MCF 10A (cell line): ENCODE measurements at regions of chr10 and their contacts with region 1.

Region 1: DNA sequence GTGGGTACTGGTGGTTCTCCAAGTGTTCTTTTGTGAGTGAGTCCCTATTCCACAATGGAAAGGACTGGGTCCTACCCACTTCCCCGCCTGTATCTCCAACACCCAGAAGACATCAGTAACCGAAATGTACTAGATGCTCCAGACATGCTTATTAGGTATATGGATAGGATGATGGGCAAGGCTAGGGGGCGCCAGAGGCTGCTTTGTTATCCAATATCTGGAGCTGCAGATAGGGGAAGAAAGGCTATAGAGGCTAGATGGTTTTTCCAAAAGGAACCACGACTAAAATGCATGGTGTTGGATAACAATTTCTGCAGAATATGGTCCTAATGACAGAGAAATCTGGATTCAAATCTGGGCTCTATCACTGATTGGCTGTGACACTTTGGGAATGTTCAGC is 56.2 kb upstream of the TM9SF3 start:
- DNase-seq: peak; percentile 59
- H3K4me3 Mint-ChIP-seq: no peak overlapping the region
- H3K27ac Mint-ChIP-seq: no peak overlapping the region
- H3K4me1 Mint-ChIP-seq: peaks cover 6% of the 10 kb centered on the region
- H3K27me3 Mint-ChIP-seq: no peaks in the 10 kb centered on the region
- CTCF ChIP-seq: no peak

Region 2: DNA sequence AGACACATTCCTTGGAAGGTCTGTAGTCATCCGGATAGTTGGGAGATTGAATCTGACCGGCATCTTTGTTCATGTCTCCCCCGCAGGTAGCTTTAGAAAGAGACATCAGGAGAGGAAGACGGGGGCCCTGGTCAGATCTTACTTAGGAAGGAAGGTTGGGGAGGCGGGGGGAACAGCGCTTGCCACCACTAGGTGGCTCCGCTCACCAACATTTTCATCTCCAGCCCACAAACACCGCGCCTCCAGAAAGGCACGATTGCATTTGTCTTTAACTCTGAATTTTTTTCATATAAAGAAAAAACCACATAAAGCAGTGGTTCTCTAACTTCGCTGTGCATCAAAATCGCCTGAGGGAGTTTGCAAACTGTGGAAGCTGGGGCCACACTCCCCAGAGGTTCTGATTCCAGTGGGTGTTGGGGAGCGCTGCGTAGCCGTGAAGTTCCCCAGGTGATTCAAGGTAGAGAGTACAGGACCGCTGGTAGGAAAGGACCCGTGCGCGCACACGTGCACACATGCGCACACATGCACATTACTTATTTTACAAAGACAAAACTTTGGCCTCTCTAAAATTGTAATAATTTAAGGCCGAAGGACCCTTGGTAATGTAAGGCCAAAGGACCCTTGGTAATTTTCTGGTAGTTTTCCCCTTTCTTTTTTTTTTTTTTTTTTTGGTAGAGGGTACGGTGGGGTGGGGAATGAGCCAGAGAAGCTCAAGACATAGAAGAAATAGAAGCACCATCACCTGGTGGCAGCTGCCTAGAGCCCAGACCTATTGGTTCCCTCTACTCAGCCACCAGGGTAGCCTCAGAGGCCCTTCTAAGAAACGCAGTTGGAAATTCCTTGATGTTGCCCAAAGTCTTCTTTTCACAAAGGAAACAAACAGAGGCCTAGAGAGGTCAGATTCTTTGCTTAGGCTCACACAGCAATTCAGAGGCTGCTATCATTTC is 246.8 kb before region 1 on chr10:
- CTCF ChIA-PET with region 1: interaction called, 3 read pairs
- POLR2A ChIA-PET with region 1: no interaction called
- intact Hi-C with region 1: loop called (anchors 5 kb)
- DNase-seq: peak; percentile 65
- H3K4me3 Mint-ChIP-seq: no peak overlapping the region
- H3K27ac Mint-ChIP-seq: no peak overlapping the region
- H3K4me1 Mint-ChIP-seq: no peaks in the 10 kb centered on the region
- H3K27me3 Mint-ChIP-seq: peaks cover 71% of the 10 kb centered on the region
- CTCF ChIP-seq: peak; percentile 76

Region 3: GRCh38 chr10:96511044-96511945 is 131.7 kb before region 1 on chr10:
- CTCF ChIA-PET with region 1: no interaction called
- POLR2A ChIA-PET with region 1: no interaction called
- intact Hi-C with region 1: no loop called
- DNase-seq: peak; percentile 78
- H3K4me3 Mint-ChIP-seq: no peak overlapping the region
- H3K27ac Mint-ChIP-seq: no peak overlapping the region
- H3K4me1 Mint-ChIP-seq: peaks cover 8% of the 10 kb centered on the region
- H3K27me3 Mint-ChIP-seq: no peaks in the 10 kb centered on the region
- CTCF ChIP-seq: peak; percentile 55

Region 4: DNA sequence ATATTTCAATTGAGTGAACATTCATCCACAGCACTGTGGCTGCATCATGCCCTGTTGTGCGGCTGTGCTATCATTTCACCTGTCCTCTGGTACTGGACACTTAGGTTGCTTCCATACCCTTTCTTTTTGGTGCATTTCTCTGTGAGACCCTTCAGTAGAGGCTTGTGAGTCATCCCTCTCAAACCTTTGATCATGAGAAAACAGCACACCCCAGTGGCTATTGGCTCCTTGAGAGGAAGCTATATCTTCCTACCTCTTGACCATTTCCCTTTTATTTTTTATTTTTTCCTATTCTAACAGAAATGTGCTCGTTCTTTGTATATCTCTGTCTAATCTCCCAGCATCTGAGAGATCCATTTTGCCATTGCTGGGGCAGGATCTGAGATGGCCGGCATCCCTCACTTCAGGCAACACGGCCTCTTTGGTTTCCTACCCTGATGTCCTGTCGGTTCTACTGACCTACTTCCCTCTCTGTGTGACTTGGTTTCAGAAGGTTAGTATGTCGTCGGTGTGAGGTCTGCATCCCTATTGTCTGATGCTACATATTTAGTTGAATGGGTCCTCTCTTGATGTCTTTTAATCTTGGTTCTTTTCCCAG is 101.1 kb after region 1 on chr10:
- CTCF ChIA-PET with region 1: interaction called, 3 read pairs
- POLR2A ChIA-PET with region 1: no interaction called
- intact Hi-C with region 1: loop called (anchors 5 kb)
- DNase-seq: peak; percentile 22
- H3K4me3 Mint-ChIP-seq: no peak overlapping the region
- H3K27ac Mint-ChIP-seq: no peak overlapping the region
- H3K4me1 Mint-ChIP-seq: no peaks in the 10 kb centered on the region
- H3K27me3 Mint-ChIP-seq: no peaks in the 10 kb centered on the region
- CTCF ChIP-seq: peak; percentile 25